Spleen (tissue), 13 donors: ENCODE measurements at regions of chr3 and their contacts with region 1.

Region 1: GRCh38 chr3:129934234-129935123 is 40.0 kb upstream of the TRH start:
- DNase-seq: peak; percentile 61
- H3K4me3 ChIP-seq: peak overlapping the region in 2 of 8 donors; percentile 16 to 38
- H3K27ac ChIP-seq: no peak overlapping the region
- H3K4me1 ChIP-seq: peaks cover 0 to 23% (median 5%) of the 10 kb centered on the region in 6 donors
- H3K27me3 ChIP-seq: no peaks in the 10 kb centered on the region
- CTCF ChIP-seq: peak; percentile 53 to 93 (median 88)
- POLR2A ChIP-seq: no peak

Region 2: GRCh38 chr3:129490242-129491045 is 444.0 kb before region 1 on chr3:
- intact Hi-C with region 1: loop called (anchors 10 kb)
- DNase-seq: peak; percentile 90
- H3K4me3 ChIP-seq: no peak overlapping the region
- H3K27ac ChIP-seq: peak overlapping the region in 5 of 8 donors; percentile 20 to 71 (median 47)
- H3K4me1 ChIP-seq: peaks cover 0 to 42% (median 10%) of the 10 kb centered on the region in 6 donors
- H3K27me3 ChIP-seq: no peaks in the 10 kb centered on the region
- CTCF ChIP-seq: peak; percentile 70 to 93 (median 86)
- POLR2A ChIP-seq: peak in 1 of 3 donors; percentile 18

Region 3: GRCh38 chr3:129633751-129634392 is 300.6 kb before region 1 on chr3:
- intact Hi-C with region 1: loop called (anchors 5 kb)
- DNase-seq: no peak
- H3K4me3 ChIP-seq: no peak overlapping the region
- H3K27ac ChIP-seq: no peak overlapping the region
- H3K4me1 ChIP-seq: peaks cover 0 to 2% (median 0%) of the 10 kb centered on the region in 6 donors
- H3K27me3 ChIP-seq: no peaks in the 10 kb centered on the region
- CTCF ChIP-seq: no peak
- POLR2A ChIP-seq: no peak

Region 4: DNA sequence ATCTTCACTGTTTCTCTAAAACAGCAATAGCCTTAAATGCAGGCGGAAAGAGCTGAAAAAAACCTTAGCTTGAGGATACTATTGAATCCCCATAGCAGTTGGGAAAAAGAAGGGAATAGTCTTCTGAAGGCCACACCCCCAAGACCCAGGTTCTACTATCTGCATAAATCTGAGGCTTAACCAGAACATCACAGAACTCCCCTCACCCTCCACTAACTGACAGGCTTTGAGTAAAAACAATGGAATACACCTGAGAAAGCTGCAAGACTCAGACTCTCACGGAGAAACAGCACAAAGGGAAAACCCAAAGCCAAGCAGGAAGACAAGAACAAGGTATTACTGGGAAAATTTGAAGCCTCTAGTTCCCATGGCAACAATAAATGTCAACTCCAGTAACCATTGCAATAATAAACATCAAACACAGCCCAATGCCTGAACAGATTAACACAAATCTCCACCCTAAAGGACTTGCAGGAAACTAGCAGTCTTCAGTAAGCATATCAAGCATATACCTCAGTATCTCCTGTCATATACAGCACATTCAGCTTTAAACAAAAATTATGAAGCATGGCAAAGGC is 97.3 kb before region 1 on chr3:
- intact Hi-C with region 1: loop called (anchors 5 kb)
- DNase-seq: no peak
- H3K4me3 ChIP-seq: no peak overlapping the region
- H3K27ac ChIP-seq: no peak overlapping the region
- H3K4me1 ChIP-seq: peaks cover 0 to 20% (median 6%) of the 10 kb centered on the region in 6 donors
- H3K27me3 ChIP-seq: no peaks in the 10 kb centered on the region
- CTCF ChIP-seq: no peak
- POLR2A ChIP-seq: no peak

Region 5: GRCh38 chr3:130093741-130094391 is 159.4 kb after region 1 on chr3:
- intact Hi-C with region 1: loop called (anchors 5 kb)
- DNase-seq: peak; percentile 85
- H3K4me3 ChIP-seq: peak overlapping the region in 6 of 8 donors; percentile 1 to 64 (median 28)
- H3K27ac ChIP-seq: peak overlapping the region in 6 of 8 donors; percentile 21 to 73 (median 64)
- H3K4me1 ChIP-seq: peaks cover 8 to 32% (median 22%) of the 10 kb centered on the region in 6 donors
- H3K27me3 ChIP-seq: no peaks in the 10 kb centered on the region
- CTCF ChIP-seq: no peak
- POLR2A ChIP-seq: no peak

Region 6: DNA sequence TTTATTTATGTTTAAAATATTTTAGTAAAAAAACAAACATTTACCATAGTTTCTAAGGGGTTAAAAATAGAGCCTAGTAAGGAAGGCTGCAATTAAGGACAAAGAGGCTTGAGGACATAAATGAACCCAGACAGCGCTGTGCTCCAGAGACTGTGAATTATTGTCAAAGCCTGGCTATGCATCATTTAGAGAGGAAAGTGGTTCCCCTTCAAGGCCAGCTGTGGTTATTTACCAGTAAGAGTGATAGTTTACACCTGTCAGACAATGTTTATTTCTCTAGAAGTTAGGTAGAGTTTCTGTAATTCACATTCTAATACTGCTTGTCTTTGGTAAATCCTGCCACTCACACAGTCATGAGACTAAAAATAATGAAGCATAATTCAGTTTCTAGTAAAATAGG is 844.6 kb after region 1 on chr3:
- intact Hi-C with region 1: no loop called
- DNase-seq: no peak
- H3K4me3 ChIP-seq: no peak overlapping the region
- H3K27ac ChIP-seq: no peak overlapping the region
- H3K4me1 ChIP-seq: peaks cover 0 to 7% (median 0%) of the 10 kb centered on the region in 6 donors
- H3K27me3 ChIP-seq: peaks cover 0 to 4% (median 0%) of the 10 kb centered on the region in 7 donors
- CTCF ChIP-seq: no peak
- POLR2A ChIP-seq: no peak